ENCODE measurements at regions of chr5 and their contacts with region 1.

Region 1: GRCh38 chr5:88140856-88141752 is 127.5 kb downstream of the TMEM161B start:
- DNase-seq: peak; percentile 95
- ATAC-seq: peak; percentile 98

Region 2: DNA sequence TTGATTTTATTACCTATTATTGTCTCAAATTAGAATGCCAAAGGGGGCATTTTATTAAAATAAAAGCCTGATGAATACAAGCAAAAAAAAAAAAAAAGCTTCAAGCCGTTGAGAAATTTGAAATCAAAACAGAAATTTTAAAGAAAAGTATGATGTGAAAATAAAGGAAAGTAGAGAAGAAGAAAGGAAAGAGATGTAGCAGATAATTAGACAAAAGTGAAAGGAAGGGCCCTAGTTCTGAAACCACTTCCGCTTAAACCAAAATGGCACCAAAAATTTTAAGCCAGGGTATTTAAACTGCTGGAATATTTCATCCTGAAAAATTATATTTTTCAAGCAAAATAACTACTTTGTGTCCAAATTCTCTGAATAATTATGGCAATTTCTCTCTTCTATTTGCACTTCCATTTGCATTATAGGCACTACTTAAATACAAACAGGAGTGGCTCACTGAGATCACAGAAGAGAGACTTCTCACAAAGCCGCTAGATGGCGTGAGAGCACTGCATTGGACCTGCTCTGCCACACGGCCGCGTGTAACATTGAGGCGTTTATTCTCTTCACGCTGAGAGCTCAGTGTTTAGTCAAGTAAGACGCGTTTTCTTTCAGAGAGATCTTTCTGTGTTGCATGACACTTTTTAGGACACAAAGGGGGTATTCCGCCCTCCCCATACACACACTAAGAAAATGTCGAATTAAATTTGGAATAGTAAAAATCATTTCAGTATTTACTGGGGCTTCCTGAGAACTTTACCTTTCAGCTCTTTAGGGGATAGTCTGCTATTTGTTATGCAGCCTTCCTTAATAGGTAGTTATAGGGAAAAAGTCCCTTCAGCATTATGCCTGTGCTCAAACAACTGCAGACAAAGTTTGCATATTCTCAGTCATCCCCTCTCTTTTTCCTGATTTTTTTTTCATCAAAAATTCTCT is 360.0 kb before region 1 on chr5:
- intact Hi-C with region 1: loop called (anchors 10 kb)
- DNase-seq: peak; percentile 82
- ATAC-seq: peak; percentile 90

Region 3: GRCh38 chr5:87899721-87900131 is 241.4 kb before region 1 on chr5:
- intact Hi-C with region 1: loop called (anchors 5 kb)
- DNase-seq: no peak
- ATAC-seq: peak; percentile 87

Region 4: DNA sequence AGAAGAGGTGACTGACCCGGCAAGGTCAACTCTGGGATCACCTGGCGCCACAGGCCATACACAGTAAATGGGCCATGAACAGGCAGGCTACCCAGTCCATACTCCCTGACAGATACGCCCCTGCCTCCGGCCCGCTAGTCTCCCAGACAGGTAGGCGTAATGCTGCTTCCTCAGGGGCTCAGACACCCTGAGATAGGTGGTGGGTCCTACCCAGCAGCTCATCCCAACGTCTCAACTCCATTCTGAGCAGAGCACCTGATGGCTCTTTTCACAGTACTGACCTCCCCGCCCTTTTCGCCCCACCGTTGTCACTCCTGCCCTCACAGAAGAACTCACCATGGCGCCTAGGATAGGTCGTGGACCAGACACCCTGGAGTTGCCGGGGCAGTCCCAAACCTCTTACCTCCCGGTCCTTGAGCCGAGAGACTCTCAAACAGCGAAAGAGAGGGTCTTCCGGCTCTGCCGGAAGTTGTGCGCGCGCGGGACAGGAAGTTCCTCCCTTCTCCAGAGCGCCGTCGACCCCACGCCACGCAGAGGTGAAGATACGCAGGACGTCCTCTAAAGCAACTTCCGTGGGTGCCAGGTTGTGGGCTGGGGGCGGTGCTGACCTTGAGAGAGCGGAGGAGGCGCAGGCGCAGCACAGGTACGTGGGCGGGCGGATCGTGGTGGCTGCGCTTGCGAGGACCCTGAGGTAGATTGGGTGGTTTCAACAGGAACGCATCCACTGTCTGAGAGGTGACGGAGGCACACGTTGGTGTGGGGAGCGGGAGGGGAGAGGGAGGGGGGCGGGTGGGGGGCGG is 127.5 kb after region 1 on chr5 and contains the start of gene TMEM161B:
- intact Hi-C with region 1: loop called (anchors 5 kb)
- DNase-seq: peak; percentile 95
- ATAC-seq: peak; percentile 99
- total RNA-seq, gene TMEM161B: 8.2 TPM

Region 5: DNA sequence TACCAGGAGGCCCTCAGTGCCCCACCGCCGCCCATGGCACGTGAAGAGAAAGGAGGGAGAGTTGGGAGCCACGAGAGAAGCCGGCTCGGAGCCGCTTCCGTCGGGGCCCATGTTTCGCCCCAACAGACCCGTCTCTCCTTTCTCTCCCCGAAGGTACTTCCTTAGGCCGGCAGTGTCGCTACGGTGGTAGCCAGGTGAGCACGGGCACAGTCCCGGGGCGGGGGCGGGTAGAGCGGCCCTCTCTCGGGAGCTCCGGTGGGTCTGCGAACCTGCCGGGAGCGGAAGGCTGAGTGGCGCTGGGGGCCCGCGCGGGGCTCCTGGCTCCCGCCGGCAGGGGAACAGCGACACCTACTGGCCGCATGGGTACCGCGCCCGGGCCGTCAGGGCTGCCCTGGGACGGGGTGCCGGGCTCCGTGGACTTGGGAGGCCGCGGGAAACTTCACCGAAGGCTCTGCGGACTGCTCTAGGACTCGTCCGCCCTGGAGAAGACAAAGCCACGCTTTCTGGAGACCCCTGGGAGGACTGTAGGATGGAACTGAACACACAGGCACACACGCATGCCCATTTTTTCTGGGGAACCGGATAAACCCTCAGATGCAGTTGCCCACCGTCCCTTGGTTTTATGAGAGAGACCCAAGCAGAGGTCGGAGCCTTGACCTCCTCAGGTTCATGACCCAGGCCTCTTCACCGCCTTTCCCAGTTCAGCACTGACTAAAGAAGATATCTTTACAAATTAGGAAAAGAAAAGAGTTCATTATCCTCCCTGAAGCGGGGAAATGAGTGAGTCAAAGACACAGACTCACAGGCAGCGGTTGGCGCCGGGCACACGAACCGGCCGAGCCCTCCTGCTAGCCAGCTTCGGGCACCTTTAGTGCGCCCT is 539.4 kb after region 1 on chr5:
- intact Hi-C with region 1: loop called (anchors 2 kb)
- DNase-seq: peak; percentile 82
- ATAC-seq: peak; percentile 82